Adrenal gland (tissue), 19 donors: ENCODE measurements at regions of chrX and their contacts with region 1.

Region 1: GRCh38 chrX:118468122-118468521 is 27.5 kb upstream of the DOCK11 start:
- DNase-seq: no peak
- H3K4me3 ChIP-seq: no peak overlapping the region
- H3K27ac ChIP-seq: no peak overlapping the region
- H3K4me1 ChIP-seq: no peaks in the 10 kb centered on the region
- H3K27me3 ChIP-seq: peaks cover 6% of the 10 kb centered on the region
- CTCF ChIP-seq: no peak
- POLR2A ChIP-seq: no peak

Region 2: DNA sequence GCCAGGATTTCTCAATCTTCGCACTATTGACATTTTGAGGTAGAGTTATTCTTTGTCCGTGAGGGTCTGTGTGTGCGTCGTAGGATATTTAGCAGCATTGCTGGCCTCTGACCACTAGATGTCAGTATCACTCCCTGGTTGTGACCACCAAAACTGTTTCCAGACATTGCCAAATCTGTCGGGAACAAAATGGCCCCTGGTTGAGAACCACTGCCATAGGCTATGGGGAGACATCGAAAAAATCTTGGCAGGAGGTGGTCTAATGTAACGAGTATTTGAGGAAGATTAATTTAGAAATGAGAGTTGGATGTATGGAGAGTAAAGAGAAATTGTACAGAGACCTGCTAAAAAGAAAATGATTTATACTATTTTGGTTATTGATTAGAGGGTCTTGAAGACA is 135.9 kb after region 1 on chrX:
- intact Hi-C with region 1: loop called in 1 of 2 experiments (anchors 10 kb)
- DNase-seq: peak; percentile 38 to 63 (median 55)
- H3K4me3 ChIP-seq: peak overlapping the region in 1 of 4 donors; percentile 32
- H3K27ac ChIP-seq: no peak overlapping the region
- H3K4me1 ChIP-seq: no peaks in the 10 kb centered on the region
- H3K27me3 ChIP-seq: peaks cover 8% of the 10 kb centered on the region
- CTCF ChIP-seq: peak; percentile 58 to 88 (median 70)
- POLR2A ChIP-seq: no peak